Calu3 (cell line): ENCODE measurements at regions of chr11 and their contacts with region 1.

Region 1: DNA sequence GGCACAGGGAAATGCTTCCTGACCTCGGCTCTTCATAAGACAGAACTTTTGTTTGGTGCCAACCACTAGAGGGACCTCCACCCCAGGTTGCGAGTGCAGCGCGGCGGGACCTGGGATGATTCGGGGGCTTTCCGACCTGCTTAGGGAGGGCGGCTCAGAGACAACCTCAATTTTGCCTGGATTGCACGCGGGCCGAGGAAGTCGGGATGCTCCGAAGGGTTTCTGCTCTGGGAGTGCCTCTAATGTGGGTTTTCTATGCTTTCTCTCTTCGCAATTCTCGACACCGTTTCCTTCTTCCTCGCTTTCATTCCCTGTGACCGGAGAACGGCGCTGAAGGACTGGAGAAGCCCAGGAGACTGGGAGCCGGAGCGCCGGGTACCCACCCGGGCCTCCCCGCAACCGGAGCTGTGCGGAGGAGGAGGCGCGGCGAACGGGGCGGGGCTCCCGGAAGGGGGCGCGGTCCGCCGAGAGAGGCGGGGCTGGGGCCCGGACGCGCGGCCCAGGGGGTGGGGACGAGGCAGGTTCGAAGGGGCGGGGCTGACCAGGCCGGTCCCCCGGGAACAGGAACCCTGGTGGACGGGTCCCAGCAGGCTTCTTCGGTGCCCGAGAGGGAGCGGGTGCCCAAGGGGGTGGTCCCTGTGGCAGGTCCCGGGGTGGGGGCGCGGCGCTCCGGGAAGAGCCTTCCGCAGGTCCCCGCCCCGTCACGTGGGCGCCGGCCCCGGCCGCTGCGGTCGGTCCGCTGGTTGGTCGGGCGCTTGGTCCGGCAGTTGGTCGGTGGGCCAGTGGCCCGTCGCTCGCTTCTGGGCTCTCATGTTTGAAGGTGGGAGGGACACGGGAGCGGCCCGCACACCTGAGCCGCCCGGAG is at the start of gene PPFIBP2:
- DNase-seq: peak; percentile 88
- H3K4me3 Mint-ChIP-seq: peak within 1 kb of the TSS; percentile 72
- H3K27ac Mint-ChIP-seq: no peak within 1 kb of the TSS
- H3K4me1 Mint-ChIP-seq: no peaks in the 10 kb centered on the region
- H3K27me3 Mint-ChIP-seq: peaks cover 56% of the 10 kb centered on the region
- CTCF ChIP-seq: peak; percentile 88
- total RNA-seq, gene PPFIBP2: 28.5 and 51.8 TPM in 2 replicates

Region 2: DNA sequence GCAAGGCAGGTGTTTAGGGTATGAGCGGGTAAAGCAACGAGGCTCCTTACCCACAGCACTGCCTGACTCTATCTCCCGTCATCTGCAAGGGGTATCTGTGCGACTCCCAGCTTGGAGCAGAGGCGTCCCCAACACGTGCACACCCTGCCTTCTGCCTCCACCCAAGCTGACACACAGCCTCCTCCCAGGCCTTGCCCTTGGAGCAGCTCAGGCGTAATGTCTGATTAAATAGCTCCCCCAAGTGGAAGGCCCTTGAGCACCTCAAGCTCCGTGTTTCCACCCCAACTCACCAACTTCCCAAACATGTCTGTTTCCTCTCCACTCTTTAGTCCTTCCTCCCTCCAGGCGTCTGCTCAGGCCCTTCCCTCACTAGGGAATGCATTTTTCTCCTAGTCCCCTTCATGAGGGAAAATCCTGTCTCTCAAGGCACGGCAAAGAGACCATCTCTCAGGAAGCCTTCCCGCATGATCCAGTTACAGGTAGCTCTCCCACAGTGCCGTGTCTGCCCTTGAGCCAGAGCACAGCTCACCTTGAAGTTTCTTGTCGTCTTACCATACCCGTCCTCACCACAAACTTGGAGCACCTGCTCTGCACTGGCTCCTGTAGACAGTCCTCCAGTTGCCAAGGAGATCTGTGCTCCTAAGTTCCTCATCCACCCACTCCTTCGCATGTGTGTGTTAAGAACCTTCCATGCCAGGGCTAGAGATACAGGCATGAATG is 144.0 kb after region 1 on chr11:
- CTCF ChIA-PET with region 1: interaction called, 13 read pairs
- intact Hi-C with region 1: no loop called
- DNase-seq: peak; percentile 64
- H3K4me3 Mint-ChIP-seq: no peak overlapping the region
- H3K27ac Mint-ChIP-seq: no peak overlapping the region
- H3K4me1 Mint-ChIP-seq: no peaks in the 10 kb centered on the region
- H3K27me3 Mint-ChIP-seq: no peaks in the 10 kb centered on the region
- CTCF ChIP-seq: peak; percentile 60

Region 3: DNA sequence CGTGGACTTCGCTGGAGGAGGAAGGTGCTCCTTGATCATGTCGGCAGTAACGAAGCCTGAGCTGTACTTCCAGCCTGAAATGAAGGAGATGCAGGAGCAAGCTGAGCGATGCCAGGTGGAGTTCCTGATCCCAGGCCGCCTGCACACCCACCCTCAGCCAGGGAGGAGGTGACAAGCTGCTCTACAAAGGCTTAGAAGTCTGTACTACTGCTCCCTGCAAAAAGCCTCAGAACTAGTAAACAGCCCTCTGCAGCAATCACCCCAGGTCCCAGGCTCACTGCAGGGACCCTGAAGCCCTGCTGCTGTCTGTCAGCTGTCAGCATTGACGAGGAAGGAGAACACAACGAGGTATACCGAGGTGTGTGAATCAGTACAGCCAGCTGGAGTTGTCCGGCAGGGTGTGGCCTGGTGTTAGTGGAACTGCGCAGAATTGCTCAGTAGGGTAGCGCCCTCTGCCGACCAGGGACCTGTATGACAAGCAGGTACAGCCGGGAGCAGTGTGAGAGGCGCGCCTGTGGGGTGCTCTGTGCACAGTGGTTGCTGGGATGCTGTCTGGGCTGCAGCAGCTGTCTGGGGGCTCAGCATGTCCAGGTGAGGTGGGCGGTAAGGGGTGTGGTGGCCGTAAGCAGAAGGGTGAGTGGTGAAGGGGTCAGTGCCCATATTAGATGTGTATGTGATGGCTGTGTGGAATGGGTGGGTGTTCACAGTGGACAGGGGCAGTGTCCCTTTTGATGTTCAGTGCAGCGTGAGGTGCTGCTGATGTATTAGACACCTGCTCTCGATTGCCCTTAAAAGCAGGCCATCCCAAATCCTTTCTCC is 152.2 kb after region 1 on chr11:
- CTCF ChIA-PET with region 1: interaction called, 3 read pairs
- intact Hi-C with region 1: loop called (anchors 5 kb)
- DNase-seq: peak; percentile 92
- H3K4me3 Mint-ChIP-seq: no peak overlapping the region
- H3K27ac Mint-ChIP-seq: no peak overlapping the region
- H3K4me1 Mint-ChIP-seq: peaks cover 16% of the 10 kb centered on the region
- H3K27me3 Mint-ChIP-seq: no peaks in the 10 kb centered on the region
- CTCF ChIP-seq: peak; percentile 79

Region 4: GRCh38 chr11:7688238-7688826 is 174.9 kb after region 1 on chr11:
- CTCF ChIA-PET with region 1: interaction called, 3 read pairs
- intact Hi-C with region 1: loop called (anchors 1 kb)
- DNase-seq: peak; percentile 22
- H3K4me3 Mint-ChIP-seq: no peak overlapping the region
- H3K27ac Mint-ChIP-seq: no peak overlapping the region
- H3K4me1 Mint-ChIP-seq: peaks cover 7% of the 10 kb centered on the region
- H3K27me3 Mint-ChIP-seq: peaks cover 25% of the 10 kb centered on the region
- CTCF ChIP-seq: peak; percentile 80